ENCODE measurements at regions of chr11 and their contacts with region 1.

Region 1: GRCh38 chr11:6251120-6251733 is 8.4 kb upstream of the CCKBR start:
- DNase-seq: peak; percentile 62 to 80 (median 78)
- H3K4me3 ChIP-seq: no peak overlapping the region
- H3K27ac ChIP-seq: peak overlapping the region; percentile 22 to 84
- H3K4me1 ChIP-seq: peaks cover 11% of the 10 kb centered on the region
- H3K27me3 ChIP-seq: no peaks in the 10 kb centered on the region
- CTCF ChIP-seq: peak; percentile 39 to 89 (median 64)
- EP300 ChIP-seq: no peak
- POLR2A ChIP-seq: no peak

Region 2: GRCh38 chr11:6203327-6203726 is 47.9 kb before region 1 on chr11:
- intact Hi-C with region 1: no loop called
- DNase-seq: no peak
- H3K4me3 ChIP-seq: no peak overlapping the region
- H3K27ac ChIP-seq: no peak overlapping the region
- H3K4me1 ChIP-seq: no peaks in the 10 kb centered on the region
- H3K27me3 ChIP-seq: no peaks in the 10 kb centered on the region
- CTCF ChIP-seq: no peak
- EP300 ChIP-seq: no peak
- POLR2A ChIP-seq: no peak

Region 3: GRCh38 chr11:6320411-6321155 is 69.4 kb after region 1 on chr11 and contains the start of gene CAVIN3:
- intact Hi-C with region 1: loop called in 1 of 4 experiments (anchors 2 kb)
- DNase-seq: peak; percentile 86 to 91 (median 89)
- H3K4me3 ChIP-seq: peak within 1 kb of the TSS; percentile 70
- H3K27ac ChIP-seq: peak within 1 kb of the TSS; percentile 96 to 98
- H3K4me1 ChIP-seq: no peaks in the 10 kb centered on the region
- H3K27me3 ChIP-seq: no peaks in the 10 kb centered on the region
- CTCF ChIP-seq: no peak
- EP300 ChIP-seq: no peak
- POLR2A ChIP-seq: peak; percentile 29
- total RNA-seq, gene CAVIN3: 43.3 to 119 (median 70.3) TPM

Region 4: DNA sequence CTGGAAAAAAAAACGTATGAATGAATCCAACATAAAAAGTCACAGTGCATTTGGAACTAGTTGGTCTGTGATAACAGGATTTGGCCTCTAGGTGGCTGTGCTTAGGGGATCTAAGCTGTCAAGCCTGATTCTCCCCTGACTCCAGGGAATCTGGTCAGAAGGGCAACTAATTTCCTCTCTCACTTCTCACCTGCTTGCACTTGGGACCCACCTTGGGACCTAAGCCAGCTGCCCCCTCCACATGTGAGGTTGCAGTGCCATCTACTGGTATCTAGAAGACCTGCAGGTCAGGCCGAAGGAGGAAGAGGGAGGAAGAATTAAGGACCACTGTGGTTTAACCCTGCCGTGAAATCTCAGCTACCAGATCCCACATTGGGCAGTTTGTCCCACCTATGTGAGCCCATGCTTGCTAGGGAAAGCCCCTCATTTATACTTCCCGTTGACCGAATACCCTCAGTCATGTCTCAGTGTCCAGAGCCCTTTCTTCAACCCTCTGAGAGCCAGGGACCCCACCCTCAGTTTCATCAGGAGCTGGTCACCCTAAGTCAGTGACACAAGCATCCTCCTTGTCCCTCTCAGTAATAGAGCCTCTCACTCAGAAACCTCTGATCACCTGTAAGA is 102.2 kb after region 1 on chr11:
- intact Hi-C with region 1: loop called in 1 of 4 experiments (anchors 10 kb)
- DNase-seq: peak; percentile 42 to 66 (median 60)
- H3K4me3 ChIP-seq: no peak overlapping the region
- H3K27ac ChIP-seq: no peak overlapping the region
- H3K4me1 ChIP-seq: no peaks in the 10 kb centered on the region
- H3K27me3 ChIP-seq: no peaks in the 10 kb centered on the region
- CTCF ChIP-seq: peak; percentile 75 to 91 (median 84)
- EP300 ChIP-seq: no peak
- POLR2A ChIP-seq: no peak

Region 5: DNA sequence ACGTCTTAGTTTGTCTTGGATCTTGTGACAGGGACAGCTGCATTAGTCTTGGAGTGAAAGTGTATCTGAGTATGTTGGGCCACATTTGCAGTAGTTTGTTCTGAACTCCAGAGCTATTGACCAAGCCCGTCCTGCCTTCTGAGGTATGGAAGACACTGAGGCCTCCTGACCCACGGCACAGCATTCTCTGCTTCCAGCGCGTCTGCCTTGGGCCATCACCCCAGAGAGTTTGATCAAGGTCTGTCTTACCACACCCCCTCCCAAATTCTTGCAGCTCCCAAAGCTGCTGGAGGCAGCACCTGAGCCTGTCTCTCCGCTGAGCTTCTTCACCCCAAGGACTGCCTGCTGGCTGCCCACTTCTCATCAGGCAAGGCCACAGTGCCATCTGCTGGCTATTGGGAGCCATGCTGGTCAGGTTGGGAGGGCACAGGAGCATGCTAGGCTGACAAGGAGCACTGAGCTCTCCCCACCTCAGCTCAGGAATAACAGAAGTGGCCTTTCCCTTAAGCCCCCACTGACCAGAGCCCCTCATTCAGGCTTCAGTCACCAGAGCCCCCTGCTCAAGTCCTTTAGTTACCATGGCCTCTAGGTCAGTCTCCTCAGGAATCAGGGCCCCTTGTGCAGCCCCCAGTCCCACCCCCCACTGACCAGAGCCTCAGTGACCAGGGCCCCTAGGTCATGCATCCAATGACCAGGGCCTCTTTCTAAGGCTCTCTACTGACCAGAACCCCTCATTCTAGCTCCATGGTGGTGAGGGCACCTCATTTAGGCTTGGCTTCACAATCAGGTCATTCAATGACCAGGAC is 111.8 kb after region 1 on chr11:
- intact Hi-C with region 1: loop called in 2 of 4 experiments (anchors 10 kb)
- DNase-seq: peak; percentile 63 to 81 (median 76)
- H3K4me3 ChIP-seq: no peak overlapping the region
- H3K27ac ChIP-seq: no peak overlapping the region
- H3K4me1 ChIP-seq: no peaks in the 10 kb centered on the region
- H3K27me3 ChIP-seq: no peaks in the 10 kb centered on the region
- CTCF ChIP-seq: peak; percentile 43 to 72 (median 65)
- EP300 ChIP-seq: no peak
- POLR2A ChIP-seq: no peak

Region 6: DNA sequence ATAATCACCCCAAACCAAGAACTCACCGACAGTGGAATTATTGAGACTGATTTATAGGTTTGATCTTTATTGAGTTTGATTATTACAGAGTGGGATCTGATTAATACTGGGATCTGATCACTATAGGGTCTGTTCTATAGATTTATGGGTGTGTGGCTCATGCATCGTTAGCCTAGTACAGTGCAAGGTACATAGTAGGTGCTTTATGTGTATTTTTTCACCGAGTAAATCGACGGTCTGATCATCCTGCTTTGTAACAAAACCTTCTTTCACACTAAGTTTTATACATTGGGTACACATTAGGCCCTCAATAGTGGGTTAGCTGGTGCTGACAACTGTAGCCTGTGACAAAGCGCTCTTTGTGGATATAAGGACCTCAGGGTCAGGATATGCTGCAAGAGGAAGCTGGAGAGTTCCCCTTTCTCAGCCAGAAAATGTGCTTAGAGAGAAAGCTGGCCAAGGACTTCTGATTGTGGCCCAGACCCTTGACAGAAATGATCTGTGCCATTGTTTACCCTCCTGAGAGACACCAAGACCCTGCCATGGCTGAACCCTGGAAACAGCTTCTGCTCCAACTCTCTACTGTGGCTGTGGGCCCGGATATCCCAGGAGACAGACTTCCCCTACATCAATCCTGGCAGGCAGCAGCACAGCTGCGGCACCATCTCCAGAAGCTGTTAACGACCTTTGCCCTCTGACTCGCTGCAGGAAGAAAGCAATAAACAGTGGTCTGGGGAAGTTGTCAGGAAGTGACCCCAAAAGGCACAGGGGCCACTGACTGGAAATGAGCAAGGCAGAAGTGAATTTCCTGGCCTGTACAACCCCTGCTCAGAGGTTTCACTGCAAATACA is 384.1 kb after region 1 on chr11:
- intact Hi-C with region 1: no loop called
- DNase-seq: peak; percentile 55 to 71 (median 59)
- H3K4me3 ChIP-seq: no peak overlapping the region
- H3K27ac ChIP-seq: peak overlapping the region in 1 of 2 donors; percentile 56
- H3K4me1 ChIP-seq: peaks cover 10% of the 10 kb centered on the region
- H3K27me3 ChIP-seq: no peaks in the 10 kb centered on the region
- CTCF ChIP-seq: no peak
- EP300 ChIP-seq: no peak
- POLR2A ChIP-seq: no peak